Left ventricle myocardium inferior (tissue), 1 donor: ENCODE measurements at regions of chr9 and their contacts with region 1.

Region 1: DNA sequence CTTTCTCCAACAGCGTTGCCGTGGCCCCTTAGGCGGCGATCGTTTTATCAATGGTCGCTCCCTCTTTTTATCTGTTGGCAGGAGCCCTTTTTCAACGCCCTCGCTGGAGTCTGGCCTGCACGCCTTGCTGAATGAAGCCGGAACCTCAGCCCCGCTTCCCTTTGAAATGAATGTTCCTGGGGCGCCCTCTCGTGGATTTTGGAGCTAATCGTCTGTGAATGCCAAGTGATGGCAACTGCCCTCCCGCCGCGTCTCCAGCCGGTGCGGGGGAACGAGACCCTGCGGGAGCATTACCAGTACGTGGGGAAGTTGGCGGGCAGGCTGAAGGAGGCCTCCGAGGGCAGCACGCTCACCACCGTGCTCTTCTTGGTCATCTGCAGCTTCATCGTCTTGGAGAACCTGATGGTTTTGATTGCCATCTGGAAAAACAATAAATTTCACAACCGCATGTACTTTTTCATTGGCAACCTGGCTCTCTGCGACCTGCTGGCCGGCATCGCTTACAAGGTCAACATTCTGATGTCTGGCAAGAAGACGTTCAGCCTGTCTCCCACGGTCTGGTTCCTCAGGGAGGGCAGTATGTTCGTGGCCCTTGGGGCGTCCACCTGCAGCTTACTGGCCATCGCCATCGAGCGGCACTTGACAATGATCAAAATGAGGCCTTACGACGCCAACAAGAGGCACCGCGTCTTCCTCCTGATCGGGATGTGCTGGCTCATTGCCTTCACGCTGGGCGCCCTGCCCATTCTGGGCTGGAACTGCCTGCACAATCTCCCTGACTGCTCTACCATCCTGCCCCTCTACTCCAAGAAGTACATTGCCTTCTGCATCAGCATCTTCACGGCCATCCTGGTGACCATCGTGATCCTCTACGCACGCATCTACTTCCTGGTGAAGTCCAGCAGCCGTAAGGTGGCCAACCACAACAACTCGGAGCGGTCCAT is 10.0 kb downstream of the S1PR3 start:
- DNase-seq: peak; percentile 87
- H3K4me3 ChIP-seq: peak overlapping the region; percentile 39
- H3K27ac ChIP-seq: peak overlapping the region; percentile 69
- H3K4me1 ChIP-seq: peaks cover 56% of the 10 kb centered on the region
- H3K27me3 ChIP-seq: peaks cover 7% of the 10 kb centered on the region
- CTCF ChIP-seq: peak; percentile 84

Region 2: DNA sequence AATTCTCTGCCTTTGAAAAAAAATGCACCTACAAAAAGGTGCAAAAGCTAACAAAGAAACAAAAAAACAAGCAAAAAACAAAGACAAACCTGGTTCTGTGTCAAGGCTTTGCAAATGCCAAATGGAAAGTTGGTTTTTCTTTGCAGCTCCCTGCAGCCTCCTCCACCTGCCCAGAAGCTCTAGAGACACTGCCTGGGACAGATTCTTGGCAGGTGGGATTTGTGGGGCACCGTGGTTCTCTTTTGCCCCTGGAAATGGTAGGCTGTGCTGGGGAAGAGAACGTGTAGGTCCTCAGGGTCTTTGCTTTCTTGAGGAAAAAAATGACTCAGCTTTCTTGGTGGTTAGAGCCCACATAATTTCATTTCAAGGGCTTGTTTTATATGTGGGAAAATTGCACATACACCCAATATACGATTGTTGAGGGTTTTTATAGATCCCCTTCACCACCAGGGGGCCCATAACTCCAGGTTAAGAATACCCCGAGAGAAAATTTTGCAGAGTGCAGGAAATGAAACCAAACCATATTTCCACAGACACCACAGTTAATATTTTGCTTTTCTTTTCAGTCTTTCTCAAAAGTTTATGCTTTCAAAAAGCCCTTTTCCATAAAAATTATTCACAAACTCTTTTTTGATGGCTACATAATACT is 407.6 kb before region 1 on chr9:
- intact Hi-C with region 1: loop called (anchors 2 kb)
- DNase-seq: no peak
- H3K4me3 ChIP-seq: no peak overlapping the region
- H3K27ac ChIP-seq: no peak overlapping the region
- H3K4me1 ChIP-seq: no peaks in the 10 kb centered on the region
- H3K27me3 ChIP-seq: peaks cover 23% of the 10 kb centered on the region
- CTCF ChIP-seq: peak; percentile 74